ENCODE measurements at regions of chr11 and their contacts with region 1.

Region 1: GRCh38 chr11:6693342-6694228 is 10.4 kb upstream of the MRPL17 start:
- DNase-seq: peak; percentile 91
- H3K4me3 ChIP-seq: no peak overlapping the region
- H3K27ac ChIP-seq: peak overlapping the region; percentile 16
- H3K4me1 ChIP-seq: peaks cover 7% of the 10 kb centered on the region
- H3K27me3 ChIP-seq: no peaks in the 10 kb centered on the region
- CTCF ChIP-seq: no peak

Region 2: GRCh38 chr11:6705905-6706535 is 12.4 kb after region 1 on chr11:
- CTCF ChIA-PET with region 1: interaction called, 28 read pairs
- dilution Hi-C with region 1: no loop called
- in situ Hi-C with region 1: no loop called
- intact Hi-C with region 1: no loop called
- DNase-seq: peak; percentile 21
- H3K4me3 ChIP-seq: no peak overlapping the region
- H3K27ac ChIP-seq: no peak overlapping the region
- H3K4me1 ChIP-seq: no peaks in the 10 kb centered on the region
- H3K27me3 ChIP-seq: no peaks in the 10 kb centered on the region
- CTCF ChIP-seq: peak; percentile 80 to 91